HCT116 (cell line): ENCODE measurements at regions of chr15 and their contacts with region 1.

Region 1: GRCh38 chr15:85289677-85290365 is 90.6 kb upstream of the AKAP13 start:
- DNase-seq: peak; percentile 58
- ATAC-seq: peak; percentile 93
- H3K4me3 ChIP-seq: no peak overlapping the region
- H3K27ac ChIP-seq: no peak overlapping the region
- H3K4me1 ChIP-seq: peaks cover 0 to 6% of the 10 kb centered on the region in 2 experiments; a peak in 1 of 4 replicates
- H3K27me3 ChIP-seq: no peaks in the 10 kb centered on the region
- CTCF ChIP-seq: peak; percentile 64 to 92 (median 75)
- POLR2A ChIP-seq: no peak
- RAD21 ChIP-seq: peak; percentile 90

Region 2: DNA sequence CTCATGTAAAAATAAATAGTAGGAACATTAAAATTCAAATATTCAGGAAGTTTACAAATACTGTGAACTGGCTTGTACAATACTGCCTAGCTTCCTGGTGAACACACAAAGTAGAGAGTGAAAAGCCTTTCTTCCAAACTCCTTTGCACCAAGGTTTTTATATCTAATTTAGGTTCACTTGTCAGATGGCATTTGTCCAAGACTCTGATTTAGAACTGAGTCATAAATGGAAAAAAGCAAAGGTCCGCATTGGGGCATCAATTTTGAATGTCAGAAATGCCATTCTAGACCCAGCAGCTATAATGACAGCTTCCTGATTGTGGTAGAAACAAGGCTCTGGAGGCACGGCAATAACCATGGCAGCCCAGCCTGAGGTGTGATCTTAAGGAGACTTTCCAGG is 147.5 kb before region 1 on chr15:
- CTCF ChIA-PET with region 1: no interaction called
- POLR2A ChIA-PET with region 1: no interaction called
- RAD21 ChIA-PET with region 1: no interaction called
- intact Hi-C with region 1: loop called (anchors 10 kb)
- DNase-seq: peak; percentile 53
- ATAC-seq: peak; percentile 81
- H3K4me3 ChIP-seq: peak overlapping the region in 1 of 2 experiments; percentile 2; a peak in 1 of 4 replicates
- H3K27ac ChIP-seq: peak overlapping the region; percentile 15; the same call in 1 of the 2 replicates
- H3K4me1 ChIP-seq: peaks cover 12 to 21% of the 10 kb centered on the region in 2 experiments
- H3K27me3 ChIP-seq: no peaks in the 10 kb centered on the region
- CTCF ChIP-seq: no peak
- POLR2A ChIP-seq: no peak
- RAD21 ChIP-seq: peak; percentile 18; the same call in 1 of the 2 replicates